Ovary (tissue), 10 donors: ENCODE measurements at regions of chr12 and their contacts with region 1.

Region 1: DNA sequence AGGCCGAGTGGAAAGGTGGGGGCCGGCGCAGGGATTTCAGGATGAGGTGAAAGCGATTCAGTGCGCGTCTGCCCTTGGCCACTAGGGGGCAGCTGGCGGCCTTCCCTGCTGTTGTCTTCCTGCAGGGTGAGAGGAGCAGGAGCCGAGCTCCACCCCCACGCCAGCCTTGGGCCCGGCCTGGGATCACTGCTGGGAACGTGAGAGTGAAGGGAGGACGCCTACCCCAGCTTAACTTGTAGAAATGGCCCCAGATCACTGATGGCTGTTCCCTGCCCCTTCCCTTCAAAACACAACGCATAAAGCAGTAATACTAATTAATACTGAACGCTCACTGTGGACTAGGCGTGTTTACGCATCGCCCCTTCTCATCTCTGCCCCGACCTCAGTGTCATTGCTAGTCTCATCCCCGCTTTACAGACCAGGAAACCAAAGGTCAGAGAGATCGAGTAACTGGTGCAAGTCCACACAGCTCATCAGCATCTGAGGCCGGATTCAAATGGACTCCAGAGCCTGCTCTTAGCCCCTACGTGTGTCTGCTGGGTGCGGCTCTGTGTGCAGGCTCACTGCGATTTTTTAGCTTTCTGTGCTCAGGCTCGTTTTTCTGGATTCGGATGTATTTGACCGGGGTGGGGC is 24.3 kb downstream of the MVK start:
- DNase-seq: peak; percentile 90 to 94 (median 92)
- H3K4me3 ChIP-seq: no peak overlapping the region
- H3K27ac ChIP-seq: no peak overlapping the region
- H3K4me1 ChIP-seq: peaks cover 2% of the 10 kb centered on the region
- H3K27me3 ChIP-seq: no peaks in the 10 kb centered on the region
- CTCF ChIP-seq: peak; percentile 90 to 92 (median 92)
- EP300 ChIP-seq: no peak
- POLR2A ChIP-seq: no peak

Region 2: DNA sequence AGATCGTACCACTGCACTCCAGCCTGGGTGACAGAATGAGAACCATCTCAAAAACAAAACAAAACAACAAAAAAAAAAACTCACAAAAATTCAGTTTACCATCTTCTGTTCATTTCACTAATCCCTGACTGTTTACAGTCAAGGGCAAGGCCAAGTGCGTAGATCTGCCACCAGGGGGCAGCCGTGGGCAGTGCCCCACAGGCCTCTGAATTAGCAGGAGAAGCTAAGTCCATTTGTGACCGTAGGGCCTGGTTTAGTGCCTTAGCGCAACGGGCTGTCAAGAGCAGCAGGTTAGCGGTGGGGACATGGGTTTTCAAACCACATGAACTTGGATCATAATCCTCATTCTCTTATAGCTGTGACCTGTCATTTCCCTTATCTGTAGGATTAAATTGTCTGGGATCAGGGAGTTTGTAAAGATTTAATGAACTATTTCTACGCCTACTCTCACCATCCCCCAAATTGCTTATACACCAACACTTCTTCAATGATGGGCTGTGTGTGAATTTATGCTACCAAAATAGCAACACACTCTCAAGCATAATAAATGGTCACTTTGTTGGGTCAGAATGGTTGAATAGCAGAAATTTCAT is 169.8 kb before region 1 on chr12:
- intact Hi-C with region 1: loop called in 1 of 4 experiments (anchors 10 kb)
- DNase-seq: peak; percentile 73 to 87 (median 83)
- H3K4me3 ChIP-seq: no peak overlapping the region
- H3K27ac ChIP-seq: no peak overlapping the region
- H3K4me1 ChIP-seq: no peaks in the 10 kb centered on the region
- H3K27me3 ChIP-seq: no peaks in the 10 kb centered on the region
- CTCF ChIP-seq: peak; percentile 70 to 91 (median 73)
- EP300 ChIP-seq: no peak
- POLR2A ChIP-seq: no peak

Region 3: DNA sequence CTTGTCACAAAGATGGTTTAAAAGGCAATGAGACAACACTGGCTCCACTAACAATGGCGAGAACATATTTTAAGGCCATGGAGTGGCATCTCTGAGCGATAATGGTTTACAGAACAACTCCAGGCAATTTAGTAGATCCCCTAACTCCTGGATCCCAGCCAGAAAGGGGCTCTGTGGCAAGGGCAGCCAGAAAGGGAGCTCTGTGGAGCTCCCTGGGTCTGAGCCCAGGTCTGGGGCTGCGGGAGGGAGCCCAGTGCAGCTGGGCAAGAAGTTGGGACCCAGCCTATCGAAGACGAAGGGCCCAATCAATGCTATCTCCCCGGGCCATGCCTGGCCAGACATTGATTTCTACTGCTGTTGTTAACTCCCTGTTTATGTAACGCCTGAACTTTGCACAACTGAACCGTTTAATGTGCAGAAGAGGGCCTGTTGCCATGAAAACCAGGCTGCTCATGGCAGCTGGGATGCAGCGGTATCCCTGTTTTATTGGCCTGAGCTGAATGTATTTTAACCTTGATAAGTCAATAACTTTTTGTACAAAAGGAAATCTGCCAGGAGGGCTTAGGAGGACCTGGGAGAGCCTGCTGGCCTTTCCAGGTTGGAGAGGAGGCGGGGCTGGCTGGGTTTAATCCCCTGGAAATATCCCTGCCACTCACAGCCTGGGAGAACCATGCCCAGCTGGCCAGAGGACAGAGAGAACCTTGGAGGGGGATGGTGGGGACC is 109.0 kb after region 1 on chr12:
- intact Hi-C with region 1: loop called in 3 of 4 experiments (anchors 5 to 10 kb)
- DNase-seq: no peak
- H3K4me3 ChIP-seq: no peak overlapping the region
- H3K27ac ChIP-seq: no peak overlapping the region
- H3K4me1 ChIP-seq: no peaks in the 10 kb centered on the region
- H3K27me3 ChIP-seq: no peaks in the 10 kb centered on the region
- CTCF ChIP-seq: no peak
- EP300 ChIP-seq: no peak
- POLR2A ChIP-seq: no peak

Region 4: DNA sequence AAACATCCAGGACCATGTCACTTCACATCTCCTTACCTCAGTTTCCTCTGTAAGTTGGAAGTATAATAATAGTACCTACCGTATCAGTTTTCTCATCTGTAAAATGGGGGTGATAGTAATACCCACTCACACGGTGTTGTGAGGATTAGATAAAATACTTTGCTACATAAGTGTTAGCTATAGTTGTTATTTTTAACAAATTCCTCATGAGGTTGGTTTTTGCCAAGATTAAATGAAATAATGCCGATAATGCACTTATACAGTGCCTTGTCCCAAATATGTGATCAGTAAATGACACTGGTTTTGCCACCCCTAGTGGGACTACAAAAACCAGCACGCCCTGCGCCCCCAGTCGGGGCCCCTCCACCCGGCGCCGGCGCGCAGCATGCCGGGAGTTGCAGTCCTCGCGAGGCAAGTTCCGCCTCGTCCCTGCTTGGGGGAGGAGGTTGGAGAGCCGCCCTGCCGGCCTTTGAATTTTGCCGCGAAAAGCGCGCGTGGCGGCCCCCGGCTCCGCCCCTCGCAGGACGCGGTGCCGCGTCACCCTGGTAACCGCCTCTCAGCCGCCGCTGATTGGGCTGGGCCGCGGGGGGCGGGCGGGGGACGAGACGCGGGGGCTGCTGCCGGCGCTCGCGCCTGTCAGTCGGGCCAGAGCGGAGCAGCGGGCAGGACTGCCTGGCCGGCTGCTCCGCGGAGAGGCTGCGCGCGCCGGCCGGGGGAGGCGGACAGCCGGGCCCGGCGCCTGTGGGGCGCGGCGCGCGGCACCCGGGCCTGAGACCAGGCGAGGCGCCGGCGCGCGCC is 115.5 kb after region 1 on chr12 and contains the start of gene FAM222A:
- intact Hi-C with region 1: loop called in 3 of 4 experiments (anchors 5 to 10 kb)
- DNase-seq: peak; percentile 98 to 99 (median 98)
- H3K4me3 ChIP-seq: peak within 1 kb of the TSS; percentile 60
- H3K27ac ChIP-seq: peak within 1 kb of the TSS; percentile 71 to 86
- H3K4me1 ChIP-seq: peaks cover 10% of the 10 kb centered on the region
- H3K27me3 ChIP-seq: no peaks in the 10 kb centered on the region
- CTCF ChIP-seq: peak in 2 of 3 donors; percentile 36 to 39
- EP300 ChIP-seq: no peak
- POLR2A ChIP-seq: peak; percentile 30
- total RNA-seq, gene FAM222A: 7.2 to 28.4 (median 15.3) TPM